CD4-positive, alpha-beta T cell (primary cell): ENCODE measurements at regions of chr14 and their contacts with region 1.

Region 1: GRCh38 chr14:68816262-68816942 is 23.5 kb upstream of the ZFP36L1 start:
- DNase-seq: peak; percentile 80 to 94 (median 88)
- ATAC-seq: peak; percentile 62
- H3K4me3 ChIP-seq: peak overlapping the region; percentile 64
- H3K4me3 Mint-ChIP-seq: peak overlapping the region; percentile 91
- H3K27ac ChIP-seq: peak overlapping the region; percentile 92 to 93
- H3K27ac Mint-ChIP-seq: peak overlapping the region; percentile 95
- H3K4me1 ChIP-seq: peaks cover 89% of the 10 kb centered on the region
- H3K4me1 Mint-ChIP-seq: peaks cover 79% of the 10 kb centered on the region
- H3K27me3 ChIP-seq: no peaks in the 10 kb centered on the region
- H3K27me3 Mint-ChIP-seq: no peaks in the 10 kb centered on the region
- CTCF ChIP-seq: peak; percentile 96

Region 2: GRCh38 chr14:67837011-67837624 is 979.3 kb before region 1 on chr14:
- CTCF ChIA-PET with region 1: interaction called, 3 read pairs
- POLR2A ChIA-PET with region 1: no interaction called
- intact Hi-C with region 1: loop called (anchors 2 kb)
- DNase-seq: peak in 13 of 14 experiments; percentile 18 to 85 (median 40)
- ATAC-seq: peak; percentile 63
- H3K4me3 ChIP-seq: no peak overlapping the region
- H3K4me3 Mint-ChIP-seq: no peak overlapping the region
- H3K27ac ChIP-seq: no peak overlapping the region
- H3K27ac Mint-ChIP-seq: no peak overlapping the region
- H3K4me1 ChIP-seq: no peaks in the 10 kb centered on the region
- H3K4me1 Mint-ChIP-seq: peaks cover 7% of the 10 kb centered on the region
- H3K27me3 ChIP-seq: no peaks in the 10 kb centered on the region
- H3K27me3 Mint-ChIP-seq: no peaks in the 10 kb centered on the region
- CTCF ChIP-seq: peak; percentile 66

Region 3: DNA sequence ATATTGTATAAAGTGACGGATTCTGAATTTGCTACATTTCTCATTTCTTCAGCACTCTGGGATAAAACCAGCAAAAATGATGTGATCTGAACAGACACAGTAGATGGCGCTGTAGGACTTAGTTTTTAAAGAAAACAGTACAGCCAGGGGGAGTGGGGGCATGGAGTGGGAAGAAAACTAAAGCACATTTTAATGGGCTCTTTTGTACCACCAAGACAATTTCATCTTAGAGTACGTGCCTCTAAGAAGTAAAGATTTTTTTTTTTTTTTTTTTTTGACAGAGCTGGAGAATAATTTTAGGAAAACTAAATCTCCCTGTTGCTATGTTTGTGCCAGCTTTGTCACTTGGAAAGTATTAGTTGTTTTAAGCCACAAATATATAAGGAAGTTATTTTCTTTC is 872.5 kb before region 1 on chr14:
- CTCF ChIA-PET with region 1: interaction called, 6 read pairs
- POLR2A ChIA-PET with region 1: interaction called, 3 read pairs
- intact Hi-C with region 1: loop called in 1 of 2 experiments (anchors 1 kb)
- DNase-seq: peak in 11 of 14 experiments; percentile 7 to 78 (median 40)
- ATAC-seq: peak; percentile 66
- H3K4me3 ChIP-seq: no peak overlapping the region
- H3K4me3 Mint-ChIP-seq: no peak overlapping the region
- H3K27ac ChIP-seq: no peak overlapping the region
- H3K27ac Mint-ChIP-seq: no peak overlapping the region
- H3K4me1 ChIP-seq: no peaks in the 10 kb centered on the region
- H3K4me1 Mint-ChIP-seq: no peaks in the 10 kb centered on the region
- H3K27me3 ChIP-seq: no peaks in the 10 kb centered on the region
- H3K27me3 Mint-ChIP-seq: no peaks in the 10 kb centered on the region
- CTCF ChIP-seq: peak; percentile 70

Region 4: DNA sequence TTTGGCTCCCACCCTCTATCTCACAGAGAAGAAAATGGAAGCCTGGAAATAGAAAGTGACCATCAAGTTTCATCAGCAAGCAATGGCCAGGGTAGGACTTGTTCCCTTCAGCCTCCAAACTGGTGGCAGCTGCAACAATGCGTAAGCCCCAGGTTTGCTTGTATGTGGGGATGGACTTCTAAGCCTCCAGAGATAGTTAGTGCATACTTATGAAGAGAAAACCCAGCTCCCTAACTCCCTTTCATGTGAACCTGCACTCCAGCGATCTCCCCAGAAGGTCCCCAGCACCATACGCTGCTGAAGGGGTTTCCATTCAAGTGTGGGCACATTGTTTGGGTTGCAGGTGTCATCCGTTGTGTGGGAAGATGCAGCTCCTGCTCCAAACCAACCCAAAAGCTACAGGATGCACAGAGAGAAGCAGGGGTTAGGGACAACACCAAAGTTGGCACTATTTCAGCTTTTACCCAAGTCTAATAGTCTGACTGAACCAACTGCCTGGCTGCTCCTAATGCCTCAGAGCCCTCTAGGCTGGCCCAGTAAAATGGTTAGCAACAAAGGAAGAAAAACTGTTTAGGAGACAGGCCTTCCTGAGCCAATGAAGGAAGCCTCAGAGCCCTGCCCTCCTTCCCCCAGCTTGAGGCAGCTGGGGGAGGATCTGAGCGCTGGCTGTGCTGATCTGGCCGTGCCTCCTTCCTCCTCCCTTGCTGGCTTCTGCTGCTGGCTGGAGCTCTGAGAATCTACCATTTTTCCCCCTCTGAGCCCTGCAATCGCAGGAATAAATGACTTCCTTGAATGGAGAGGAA is 35.8 kb before region 1 on chr14:
- CTCF ChIA-PET with region 1: interaction called, 115 read pairs
- POLR2A ChIA-PET with region 1: interaction called, 816 read pairs
- intact Hi-C with region 1: loop called in 1 of 2 experiments (anchors 5 kb)
- DNase-seq: peak in 9 of 14 experiments; percentile 27 to 77 (median 44)
- ATAC-seq: peak; percentile 36
- H3K4me3 ChIP-seq: peak overlapping the region; percentile 44
- H3K4me3 Mint-ChIP-seq: peak overlapping the region; percentile 79
- H3K27ac ChIP-seq: peak overlapping the region; percentile 56 to 58
- H3K27ac Mint-ChIP-seq: peak overlapping the region; percentile 92
- H3K4me1 ChIP-seq: peaks cover 81% of the 10 kb centered on the region
- H3K4me1 Mint-ChIP-seq: peaks cover 79% of the 10 kb centered on the region
- H3K27me3 ChIP-seq: no peaks in the 10 kb centered on the region
- H3K27me3 Mint-ChIP-seq: no peaks in the 10 kb centered on the region
- CTCF ChIP-seq: no peak

Region 5: DNA sequence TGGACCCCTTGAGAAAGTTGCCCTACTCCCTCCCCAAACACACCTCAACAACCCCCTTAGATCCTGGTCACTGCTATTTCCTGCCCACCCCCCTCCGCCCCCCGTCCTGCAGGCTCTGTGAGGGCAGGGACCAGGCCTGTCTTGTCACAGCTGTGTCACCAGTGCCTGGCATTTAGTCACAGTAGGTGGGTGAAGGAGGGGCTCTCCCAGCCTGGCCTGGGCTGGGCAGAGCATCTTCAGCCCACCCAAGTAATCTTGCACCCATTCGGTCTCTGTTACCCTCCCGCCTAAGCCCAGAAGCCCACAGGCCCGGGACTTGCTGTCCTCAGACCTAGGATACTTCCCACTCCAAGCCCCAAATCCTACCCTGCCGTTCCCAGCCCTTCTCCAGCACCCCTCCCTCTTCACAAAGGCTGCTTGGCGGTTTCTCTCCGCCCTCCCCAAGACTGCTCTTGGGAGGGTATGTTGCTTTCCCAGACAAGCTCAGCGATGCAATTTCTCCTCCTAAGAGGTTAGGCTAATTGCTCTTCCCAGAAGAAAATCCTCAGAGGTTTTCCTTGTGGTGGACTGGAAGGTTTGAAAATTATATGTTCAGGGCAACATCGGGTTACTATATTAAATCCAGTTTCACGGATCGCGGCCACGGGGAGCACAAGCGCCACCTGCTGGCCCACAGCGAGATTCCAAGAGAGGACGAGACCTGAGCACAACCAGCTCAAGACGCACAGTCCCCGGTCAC is 27.2 kb after region 1 on chr14:
- CTCF ChIA-PET with region 1: interaction called, 10 read pairs
- POLR2A ChIA-PET with region 1: interaction called, 7 read pairs
- intact Hi-C with region 1: no loop called
- DNase-seq: peak; percentile 56 to 86 (median 73)
- ATAC-seq: peak; percentile 85
- H3K4me3 ChIP-seq: no peak overlapping the region
- H3K4me3 Mint-ChIP-seq: peak overlapping the region; percentile 28
- H3K27ac ChIP-seq: no peak overlapping the region
- H3K27ac Mint-ChIP-seq: no peak overlapping the region
- H3K4me1 ChIP-seq: peaks cover 17% of the 10 kb centered on the region
- H3K4me1 Mint-ChIP-seq: peaks cover 23% of the 10 kb centered on the region
- H3K27me3 ChIP-seq: no peaks in the 10 kb centered on the region
- H3K27me3 Mint-ChIP-seq: no peaks in the 10 kb centered on the region
- CTCF ChIP-seq: peak; percentile 94